Vagina (tissue), 2 donors: ENCODE measurements at regions of chr17 and their contacts with region 1.

Region 1: GRCh38 chr17:48787828-48788227 is 29.2 kb downstream of the TTLL6 start:
- DNase-seq: no peak
- H3K4me3 ChIP-seq: no peak overlapping the region
- H3K27ac ChIP-seq: no peak overlapping the region
- H3K4me1 ChIP-seq: no peaks in the 10 kb centered on the region
- H3K27me3 ChIP-seq: no peaks in the 10 kb centered on the region
- CTCF ChIP-seq: no peak
- POLR2A ChIP-seq: no peak

Region 2: DNA sequence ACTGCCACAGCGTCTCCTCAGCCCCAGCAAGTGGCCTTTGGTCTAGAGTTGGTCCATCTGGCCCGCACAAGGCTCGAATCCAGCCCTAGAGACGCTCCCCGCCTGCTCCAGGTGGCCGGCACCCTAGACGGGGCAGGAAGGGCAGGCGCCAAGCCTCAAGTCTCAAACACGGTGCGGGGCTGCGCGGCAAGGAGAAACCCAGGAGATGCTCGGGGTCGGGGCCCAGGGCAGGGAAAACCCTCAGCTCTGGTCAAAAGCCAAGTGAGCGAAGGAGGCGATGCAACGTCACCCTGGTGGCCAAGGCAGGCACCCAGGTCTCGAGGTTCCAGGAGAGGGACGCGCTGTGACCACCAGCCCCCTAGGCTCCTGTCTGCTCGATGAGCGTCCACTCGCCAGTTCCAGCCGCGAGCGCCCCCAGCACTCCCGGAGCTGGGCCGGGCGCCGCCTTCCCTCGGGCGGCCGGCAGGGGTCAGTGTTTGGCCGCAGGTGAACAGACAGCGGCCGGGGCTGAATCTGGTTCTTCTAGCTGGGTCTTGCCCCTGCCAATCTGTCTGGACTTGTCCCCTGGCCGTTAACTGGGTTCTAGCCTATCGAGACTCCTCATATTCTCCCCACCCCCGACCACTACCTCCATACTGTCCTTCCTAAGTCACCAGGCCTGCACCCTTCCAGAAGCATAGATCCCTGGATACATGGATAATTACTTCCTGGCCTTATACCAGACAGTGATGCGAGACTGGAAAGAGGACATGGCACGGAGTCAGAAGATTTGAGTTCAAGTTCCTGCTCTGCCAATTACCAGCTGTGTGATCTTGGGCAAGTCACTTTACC is 109.5 kb before region 1 on chr17:
- intact Hi-C with region 1: loop called (anchors 10 kb)
- DNase-seq: no peak
- H3K4me3 ChIP-seq: no peak overlapping the region
- H3K27ac ChIP-seq: no peak overlapping the region
- H3K4me1 ChIP-seq: peaks cover 6% of the 10 kb centered on the region
- H3K27me3 ChIP-seq: no peaks in the 10 kb centered on the region
- CTCF ChIP-seq: peak; percentile 68 to 84 (median 78)
- POLR2A ChIP-seq: no peak